ENCODE measurements at regions of chr17 and their contacts with region 1.

Region 1: DNA sequence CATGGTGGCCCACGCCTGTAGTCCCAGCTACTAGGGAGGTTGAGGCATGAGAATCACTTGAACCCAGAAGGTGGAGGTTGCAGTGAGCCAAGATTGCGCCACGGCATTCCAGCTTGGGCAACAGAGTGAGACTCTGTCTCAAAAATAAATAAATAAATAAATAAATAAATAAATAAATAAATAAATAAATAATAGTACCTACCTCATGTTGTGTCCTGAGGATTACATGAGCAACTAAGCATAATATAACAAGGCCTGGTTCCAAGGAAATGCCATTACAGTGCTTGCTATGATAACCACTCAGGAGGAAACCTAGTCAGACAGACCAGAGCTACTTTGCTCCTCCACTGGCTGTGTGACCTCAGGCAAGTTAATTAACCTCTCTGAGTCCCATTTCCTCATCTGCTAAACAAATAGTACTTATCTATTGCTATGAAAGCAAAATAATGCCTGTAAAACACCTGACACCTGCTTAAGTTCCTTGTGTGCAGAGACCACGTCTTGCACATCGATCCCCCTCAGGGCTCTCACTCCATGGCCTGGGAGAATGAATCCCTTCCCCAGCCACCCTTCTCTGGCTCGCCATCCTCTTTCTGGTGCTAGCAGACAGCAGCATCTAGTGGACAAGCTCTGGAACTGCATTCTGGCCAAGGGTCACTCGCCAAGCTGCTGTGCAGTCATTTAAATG is 7.5 kb downstream of the EPOP start:
- DNase-seq: peak; percentile 68
- ATAC-seq: peak; percentile 82
- H3K4me3 Mint-ChIP-seq: no peak overlapping the region
- H3K27ac Mint-ChIP-seq: no peak overlapping the region
- H3K4me1 Mint-ChIP-seq: peaks cover 15% of the 10 kb centered on the region
- H3K27me3 Mint-ChIP-seq: peaks cover 52% of the 10 kb centered on the region
- CTCF ChIP-seq: peak; percentile 98

Region 2: GRCh38 chr17:38509008-38509771 is 158.1 kb before region 1 on chr17:
- CTCF ChIA-PET with region 1: interaction called, 13 read pairs
- POLR2A ChIA-PET with region 1: no interaction called
- intact Hi-C with region 1: no loop called
- DNase-seq: peak; percentile 92
- ATAC-seq: peak; percentile 97
- H3K4me3 Mint-ChIP-seq: peak overlapping the region; percentile 69
- H3K27ac Mint-ChIP-seq: no peak overlapping the region
- H3K4me1 Mint-ChIP-seq: peaks cover 10% of the 10 kb centered on the region
- H3K27me3 Mint-ChIP-seq: peaks cover 30% of the 10 kb centered on the region
- CTCF ChIP-seq: peak; percentile 73

Region 3: GRCh38 chr17:38584350-38584925 is 82.8 kb before region 1 on chr17:
- CTCF ChIA-PET with region 1: interaction called, 33 read pairs
- POLR2A ChIA-PET with region 1: interaction called, 3 read pairs
- intact Hi-C with region 1: loop called (anchors 10 kb)
- DNase-seq: peak; percentile 69
- ATAC-seq: peak; percentile 78
- H3K4me3 Mint-ChIP-seq: no peak overlapping the region
- H3K27ac Mint-ChIP-seq: no peak overlapping the region
- H3K4me1 Mint-ChIP-seq: peaks cover 4% of the 10 kb centered on the region
- H3K27me3 Mint-ChIP-seq: peaks cover 61% of the 10 kb centered on the region
- CTCF ChIP-seq: peak; percentile 99

Region 4: DNA sequence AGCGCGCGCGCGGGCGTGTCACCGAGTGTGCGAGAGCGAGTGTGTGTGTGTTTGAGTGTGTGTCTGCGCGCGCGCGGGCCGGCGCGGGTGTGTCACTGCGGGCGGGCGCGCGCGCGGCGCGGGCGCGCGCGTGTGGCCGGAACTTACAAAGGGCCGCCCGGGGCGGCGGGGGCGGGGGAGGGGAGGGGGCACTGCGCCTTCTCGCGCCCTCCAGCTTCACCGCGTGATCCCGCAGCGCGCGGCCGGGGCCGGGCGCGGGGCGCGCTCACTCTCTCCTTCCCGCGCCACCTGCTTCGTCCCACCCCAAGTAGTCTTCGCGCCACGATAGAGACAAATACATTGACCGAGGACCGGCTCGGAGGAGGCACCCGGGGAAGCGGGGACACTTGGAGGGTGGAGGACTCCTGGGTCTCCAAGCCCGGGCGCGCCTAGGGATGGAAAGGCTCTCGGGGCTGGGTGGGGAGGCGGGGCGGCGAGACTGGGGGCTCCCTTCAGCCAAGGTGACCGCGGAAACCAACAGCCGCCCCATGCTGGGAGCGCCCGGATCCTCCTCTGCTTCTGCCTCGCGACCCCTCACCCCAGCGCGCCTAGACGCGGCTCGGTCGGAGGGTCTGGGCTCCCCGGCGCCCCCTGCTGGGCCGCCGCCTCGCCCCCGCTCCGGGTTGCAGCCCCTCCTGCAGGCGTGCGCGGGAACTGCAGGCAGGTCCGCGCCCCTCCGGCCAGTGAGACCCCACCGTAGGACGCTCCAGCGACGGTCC is 61.2 kb before region 1 on chr17 and contains the start of gene SRCIN1:
- CTCF ChIA-PET with region 1: interaction called, 26 read pairs
- POLR2A ChIA-PET with region 1: interaction called, 3 read pairs
- intact Hi-C with region 1: no loop called
- DNase-seq: peak; percentile 75
- ATAC-seq: peak; percentile 69
- H3K4me3 Mint-ChIP-seq: peak within 1 kb of the TSS; percentile 67
- H3K27ac Mint-ChIP-seq: no peak within 1 kb of the TSS
- H3K4me1 Mint-ChIP-seq: peaks cover 15% of the 10 kb centered on the region
- H3K27me3 Mint-ChIP-seq: peaks cover 56% of the 10 kb centered on the region
- CTCF ChIP-seq: peak; percentile 100
- total RNA-seq, gene SRCIN1: 0.74 to 1.1 TPM

Region 5: GRCh38 chr17:38654411-38655398 is 12.5 kb before region 1 on chr17:
- CTCF ChIA-PET with region 1: interaction called, 34 read pairs
- POLR2A ChIA-PET with region 1: interaction called, 4 read pairs
- intact Hi-C with region 1: no loop called
- DNase-seq: peak; percentile 60
- ATAC-seq: peak; percentile 84
- H3K4me3 Mint-ChIP-seq: peak overlapping the region; percentile 31
- H3K27ac Mint-ChIP-seq: no peak overlapping the region
- H3K4me1 Mint-ChIP-seq: peaks cover 38% of the 10 kb centered on the region
- H3K27me3 Mint-ChIP-seq: peaks cover 4% of the 10 kb centered on the region
- CTCF ChIP-seq: no peak

Region 6: DNA sequence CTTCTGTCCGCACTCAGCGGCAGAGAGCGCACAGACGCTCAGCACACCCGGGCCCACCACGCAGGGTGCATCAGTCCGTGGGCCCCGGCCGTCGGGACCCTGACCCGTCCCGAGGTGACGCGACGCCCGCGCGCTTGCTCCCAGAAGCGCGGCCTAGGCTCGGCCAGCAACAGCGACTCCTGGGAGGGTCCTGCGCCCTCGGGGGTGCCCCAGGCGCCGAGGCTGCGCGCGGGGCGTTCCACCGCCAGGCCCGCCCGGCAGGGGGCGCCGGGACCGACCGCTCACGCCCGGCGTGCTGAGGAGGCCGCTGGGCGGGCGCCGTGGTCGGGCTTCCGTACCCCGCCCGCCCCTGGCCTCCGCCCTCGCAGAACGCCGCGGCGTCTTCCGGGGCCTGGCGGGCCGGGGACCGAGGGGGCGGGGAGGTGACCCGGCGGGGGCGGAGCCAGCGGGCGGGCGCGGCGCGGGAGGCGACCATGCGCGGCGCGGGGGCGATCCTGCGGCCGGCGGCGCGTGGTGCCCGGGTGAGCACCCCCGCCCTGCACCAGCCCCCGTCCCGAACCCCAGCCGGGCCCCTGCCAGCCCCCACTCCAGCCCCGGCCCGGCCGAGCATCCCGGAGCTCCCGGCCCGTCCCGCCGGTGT is 62.8 kb after region 1 on chr17 and contains the start of gene CISD3:
- CTCF ChIA-PET with region 1: interaction called, 160 read pairs
- POLR2A ChIA-PET with region 1: interaction called, 33 read pairs
- intact Hi-C with region 1: no loop called
- DNase-seq: peak; percentile 86
- ATAC-seq: peak; percentile 70
- H3K4me3 Mint-ChIP-seq: peak within 1 kb of the TSS; percentile 89
- H3K27ac Mint-ChIP-seq: peak within 1 kb of the TSS; percentile 99
- H3K4me1 Mint-ChIP-seq: peaks cover 80% of the 10 kb centered on the region
- H3K27me3 Mint-ChIP-seq: no peaks in the 10 kb centered on the region
- CTCF ChIP-seq: peak; percentile 59
- total RNA-seq, gene CISD3: 43.2 to 44.2 TPM

Measured in activated CD8-positive, alpha-beta T cell treated with anti-CD3 and anti-CD28 coated beads for 36 hours (primary cell).